Breast epithelium (tissue), 4 donors: ENCODE measurements at regions of chr19 and their contacts with region 1.

Region 1: GRCh38 chr19:46426506-46427162 is 2.1 kb downstream of the PNMA8C start:
- DNase-seq: no peak
- H3K4me3 ChIP-seq: peak overlapping the region; percentile 51 to 71 (median 59)
- H3K27ac ChIP-seq: peak overlapping the region; percentile 60 to 72
- H3K4me1 ChIP-seq: peaks cover 0 to 3% of the 10 kb centered on the region in 2 donors
- H3K27me3 ChIP-seq: no peaks in the 10 kb centered on the region
- CTCF ChIP-seq: no peak
- POLR2A ChIP-seq: no peak

Region 2: DNA sequence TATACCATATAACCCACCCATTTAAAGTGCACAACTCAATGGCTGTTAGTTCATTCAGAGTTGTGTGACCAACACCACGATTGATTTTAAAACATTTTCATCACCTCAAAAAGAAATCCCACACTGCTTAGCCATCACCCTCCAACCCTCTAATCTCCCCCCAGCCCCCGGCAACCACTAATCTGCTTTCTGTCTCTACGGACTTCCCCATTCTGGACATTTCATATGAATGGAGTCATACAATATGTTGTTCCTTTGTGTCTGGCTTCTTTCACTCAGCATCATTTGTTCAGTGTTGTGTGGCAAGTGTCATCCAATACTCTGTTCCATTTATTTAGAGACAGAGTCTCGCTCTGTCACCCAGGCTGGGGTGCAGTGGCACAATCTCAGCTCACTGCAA is 73.1 kb after region 1 on chr19:
- intact Hi-C with region 1: loop called (anchors 2 kb)
- DNase-seq: no peak
- H3K4me3 ChIP-seq: no peak overlapping the region
- H3K27ac ChIP-seq: no peak overlapping the region
- H3K4me1 ChIP-seq: no peaks in the 10 kb centered on the region
- H3K27me3 ChIP-seq: no peaks in the 10 kb centered on the region
- CTCF ChIP-seq: no peak
- POLR2A ChIP-seq: no peak